A549 (cell line): ENCODE measurements at regions of chr4 and their contacts with region 1.

Region 1: DNA sequence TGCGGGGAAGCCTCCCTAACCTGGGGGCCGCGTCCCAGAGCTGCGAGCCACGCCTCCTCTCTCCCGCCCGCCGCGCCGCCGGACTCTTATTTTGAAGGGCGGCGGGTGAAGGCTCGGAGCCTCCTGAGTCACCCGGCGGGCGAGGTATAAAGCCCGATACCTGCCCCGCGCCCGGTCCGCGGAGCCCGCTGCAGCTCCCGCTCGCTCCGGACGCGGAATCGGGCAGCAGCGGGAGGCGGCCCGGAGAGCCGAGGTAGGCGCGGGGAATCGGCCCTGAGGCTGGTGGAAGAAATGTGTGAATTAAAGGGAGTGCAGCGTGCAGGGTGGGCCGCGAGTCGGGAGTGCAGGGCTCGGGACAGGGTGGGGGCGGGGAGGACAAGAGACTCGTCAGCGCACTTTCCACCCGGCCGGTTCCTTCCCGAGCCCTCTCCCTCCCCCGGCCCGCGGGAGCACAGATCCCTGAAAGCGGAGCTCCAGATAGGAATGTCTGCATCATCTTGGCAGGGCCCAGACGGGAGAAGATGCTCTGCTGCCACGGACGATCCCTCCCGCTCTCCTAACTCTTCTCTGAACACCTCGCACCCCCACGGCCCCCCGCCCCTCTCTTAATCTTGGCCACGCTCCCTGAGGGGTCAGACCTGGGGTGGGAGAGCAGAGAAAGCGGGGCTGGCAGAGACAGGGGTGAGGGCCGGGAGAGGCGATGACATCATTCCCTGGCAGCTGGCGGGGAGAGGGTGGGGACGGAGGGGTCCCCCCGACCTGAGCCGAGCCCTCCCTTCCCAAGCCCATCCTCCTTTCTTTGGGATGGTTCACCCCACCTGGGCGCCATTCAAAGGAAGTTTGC is 177.9 kb downstream of the CBR4 start:
- DNase-seq: peak; percentile 76 to 77
- ATAC-seq: peak; percentile 87
- H3K4me3 ChIP-seq: peak overlapping the region; percentile 99
- H3K27ac ChIP-seq: peak overlapping the region; percentile 95 to 97
- H3K4me1 ChIP-seq: peaks cover 45% of the 10 kb centered on the region
- CTCF ChIP-seq: no peak
- EP300 ChIP-seq: no peak
- POLR2A ChIP-seq: peak; percentile 92
- RAD21 ChIP-seq: peak in 1 of 2 experiments; percentile 28; a peak in 1 of 5 replicates

Region 2: GRCh38 chr4:168724686-168725411 is 107.3 kb before region 1 on chr4:
- CTCF ChIA-PET with region 1: no interaction called
- POLR2A ChIA-PET with region 1: no interaction called
- DNase-seq: no peak
- ATAC-seq: no peak
- H3K4me3 ChIP-seq: no peak overlapping the region
- H3K27ac ChIP-seq: no peak overlapping the region
- H3K4me1 ChIP-seq: no peaks in the 10 kb centered on the region
- CTCF ChIP-seq: no peak
- EP300 ChIP-seq: no peak
- POLR2A ChIP-seq: no peak
- RAD21 ChIP-seq: no peak

Region 3: GRCh38 chr4:168797176-168797575 is 35.0 kb before region 1 on chr4:
- CTCF ChIA-PET with region 1: interaction called, 4 read pairs
- POLR2A ChIA-PET with region 1: interaction called, 15 read pairs
- DNase-seq: peak in 1 of 2 experiments; percentile 77
- ATAC-seq: peak; percentile 77 to 79
- H3K4me3 ChIP-seq: peak overlapping the region; percentile 20; the same call in 2 of the 3 replicates
- H3K27ac ChIP-seq: peak overlapping the region; percentile 91 to 95
- H3K4me1 ChIP-seq: peaks cover 51% of the 10 kb centered on the region
- CTCF ChIP-seq: no peak
- EP300 ChIP-seq: peak; percentile 70 to 80; a peak in 3 of 5 replicates
- POLR2A ChIP-seq: no peak
- RAD21 ChIP-seq: no peak; a peak in 1 of 5 replicates

Region 4: GRCh38 chr4:168815379-168816345 is 16.5 kb before region 1 on chr4:
- CTCF ChIA-PET with region 1: interaction called, 19 read pairs
- POLR2A ChIA-PET with region 1: interaction called, 76 read pairs
- DNase-seq: no peak
- ATAC-seq: no peak
- H3K4me3 ChIP-seq: no peak overlapping the region
- H3K27ac ChIP-seq: peak overlapping the region; percentile 78 to 88
- H3K4me1 ChIP-seq: peaks cover 58% of the 10 kb centered on the region
- CTCF ChIP-seq: no peak
- EP300 ChIP-seq: no peak
- POLR2A ChIP-seq: no peak
- RAD21 ChIP-seq: no peak

Region 5: DNA sequence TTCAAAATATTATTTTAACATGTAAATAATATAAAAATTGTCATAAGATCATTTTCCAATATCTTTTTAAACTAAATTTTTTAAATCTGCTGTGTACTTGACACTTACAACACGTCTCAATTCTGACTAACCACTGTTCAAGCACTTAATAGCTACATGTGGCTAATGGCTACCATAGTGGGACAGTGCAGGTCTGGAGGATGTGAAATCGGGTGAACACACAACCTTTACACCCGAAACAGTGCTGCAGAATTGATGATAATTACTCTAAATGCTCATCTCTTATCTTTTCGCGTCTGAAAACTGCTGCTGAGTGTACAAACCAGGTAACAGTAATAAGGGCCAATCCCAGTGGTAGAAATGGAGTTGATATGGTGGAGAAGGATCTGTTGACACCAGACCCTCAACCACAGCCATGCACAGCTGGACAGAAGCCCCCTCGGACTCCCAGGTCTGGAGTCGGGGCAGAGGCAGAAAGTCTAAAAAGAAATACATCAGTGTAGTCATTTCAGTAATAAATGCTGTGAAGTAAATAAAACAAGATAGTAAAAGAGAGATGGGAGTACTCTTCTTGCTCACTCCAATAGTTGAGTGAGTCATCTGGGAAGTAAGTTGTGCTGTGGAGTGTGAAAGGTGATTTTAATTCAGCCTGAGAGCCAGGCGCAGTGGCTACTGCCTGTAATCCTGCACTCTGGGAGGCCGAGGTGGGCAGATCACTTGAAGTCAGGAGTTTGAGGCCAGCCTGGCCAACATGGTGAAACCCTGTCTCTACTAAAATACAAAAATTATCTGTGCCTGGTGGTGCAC is 27.9 kb after region 1 on chr4:
- CTCF ChIA-PET with region 1: no interaction called
- POLR2A ChIA-PET with region 1: no interaction called
- DNase-seq: no peak
- ATAC-seq: no peak
- H3K4me3 ChIP-seq: no peak overlapping the region
- H3K27ac ChIP-seq: no peak overlapping the region
- H3K4me1 ChIP-seq: peaks cover 31% of the 10 kb centered on the region
- CTCF ChIP-seq: no peak
- EP300 ChIP-seq: no peak
- POLR2A ChIP-seq: no peak
- RAD21 ChIP-seq: no peak

Region 6: DNA sequence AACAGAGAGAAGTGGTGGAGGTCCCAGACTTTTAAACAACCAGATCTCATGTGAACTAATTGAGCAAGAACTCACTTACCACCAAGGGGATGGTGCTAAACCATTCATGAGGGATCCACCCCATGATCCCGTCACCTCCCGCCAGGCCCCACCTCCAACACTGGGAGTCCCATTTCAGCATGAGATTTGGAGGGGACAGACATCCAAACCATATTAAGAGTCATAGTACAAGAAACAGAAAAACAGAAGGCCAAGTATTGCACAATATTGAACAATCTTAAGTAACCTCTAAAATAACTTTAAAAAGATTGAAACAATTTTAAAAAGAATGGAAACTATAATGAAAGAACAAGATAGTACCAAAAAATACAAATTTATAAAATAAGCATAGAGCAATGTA is 67.9 kb after region 1 on chr4:
- CTCF ChIA-PET with region 1: no interaction called
- POLR2A ChIA-PET with region 1: no interaction called
- DNase-seq: no peak
- ATAC-seq: no peak
- H3K4me3 ChIP-seq: no peak overlapping the region
- H3K27ac ChIP-seq: no peak overlapping the region
- H3K4me1 ChIP-seq: no peaks in the 10 kb centered on the region
- CTCF ChIP-seq: no peak
- EP300 ChIP-seq: no peak
- POLR2A ChIP-seq: no peak
- RAD21 ChIP-seq: no peak